ENCODE measurements at regions of chr6 and their contacts with region 1.

Region 1: GRCh38 chr6:53794720-53795253 is at the start of gene LRRC1:
- DNase-seq: peak; percentile 90
- H3K4me3 Mint-ChIP-seq: peak within 1 kb of the TSS; percentile 97
- H3K27ac Mint-ChIP-seq: peak within 1 kb of the TSS; percentile 76
- H3K4me1 Mint-ChIP-seq: peaks cover 24% of the 10 kb centered on the region
- H3K27me3 Mint-ChIP-seq: peaks cover 9% of the 10 kb centered on the region
- total RNA-seq, gene LRRC1: 3.2 TPM

Region 2: GRCh38 chr6:53651764-53652401 is 142.9 kb before region 1 on chr6:
- CTCF ChIA-PET with region 1: interaction called, 3 read pairs
- POLR2A ChIA-PET with region 1: no interaction called
- intact Hi-C with region 1: loop called (anchors 5 kb)
- DNase-seq: peak; percentile 86
- H3K4me3 Mint-ChIP-seq: peak overlapping the region; percentile 85
- H3K27ac Mint-ChIP-seq: peak overlapping the region; percentile 80
- H3K4me1 Mint-ChIP-seq: peaks cover 31% of the 10 kb centered on the region
- H3K27me3 Mint-ChIP-seq: no peaks in the 10 kb centered on the region

Region 3: DNA sequence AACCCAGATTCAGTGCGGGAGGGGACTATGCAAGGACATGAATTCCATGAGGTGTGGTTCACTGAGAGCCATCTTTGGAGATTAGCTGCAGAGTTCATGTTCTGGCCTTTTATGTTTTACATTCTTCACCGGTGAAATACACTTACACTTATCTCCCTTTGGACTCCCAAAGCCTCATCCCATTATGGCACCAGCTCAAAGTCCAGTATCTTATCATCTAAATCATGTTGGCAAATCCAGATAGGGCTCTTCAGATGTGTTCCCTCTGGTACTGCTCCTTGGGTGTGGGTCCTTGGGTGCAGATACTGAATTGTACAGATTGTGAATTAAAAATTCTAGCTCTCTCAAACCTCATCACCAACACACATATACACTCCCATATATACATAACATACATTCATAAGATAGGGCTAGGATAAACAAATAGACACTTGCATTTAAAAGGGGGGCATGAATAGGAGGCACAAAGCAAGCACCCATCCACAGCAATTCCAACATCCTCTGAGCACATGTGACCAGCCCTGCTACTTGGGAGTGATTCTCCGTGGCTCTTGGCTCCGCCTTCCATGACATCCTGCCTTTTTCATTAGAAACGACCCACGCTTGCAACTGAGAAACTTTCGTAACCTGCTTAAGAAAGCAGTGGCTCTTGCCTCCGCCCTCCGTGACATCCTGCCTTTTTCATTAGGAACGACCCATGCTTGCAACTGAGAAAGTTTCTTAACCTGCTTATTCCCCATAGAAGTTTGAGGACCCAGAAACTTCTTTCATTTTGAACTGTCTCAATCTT is 53.6 kb before region 1 on chr6:
- CTCF ChIA-PET with region 1: no interaction called
- POLR2A ChIA-PET with region 1: no interaction called
- intact Hi-C with region 1: loop called (anchors 1 kb)
- DNase-seq: peak; percentile 67
- H3K4me3 Mint-ChIP-seq: peak overlapping the region; percentile 20
- H3K27ac Mint-ChIP-seq: no peak overlapping the region
- H3K4me1 Mint-ChIP-seq: peaks cover 13% of the 10 kb centered on the region
- H3K27me3 Mint-ChIP-seq: peaks cover 3% of the 10 kb centered on the region

Region 4: GRCh38 chr6:53805725-53806124 is 10.9 kb after region 1 on chr6:
- CTCF ChIA-PET with region 1: no interaction called
- POLR2A ChIA-PET with region 1: no interaction called
- intact Hi-C with region 1: loop called (anchors 1 kb)
- DNase-seq: peak; percentile 15
- H3K4me3 Mint-ChIP-seq: no peak overlapping the region
- H3K27ac Mint-ChIP-seq: no peak overlapping the region
- H3K4me1 Mint-ChIP-seq: no peaks in the 10 kb centered on the region
- H3K27me3 Mint-ChIP-seq: no peaks in the 10 kb centered on the region

Region 5: DNA sequence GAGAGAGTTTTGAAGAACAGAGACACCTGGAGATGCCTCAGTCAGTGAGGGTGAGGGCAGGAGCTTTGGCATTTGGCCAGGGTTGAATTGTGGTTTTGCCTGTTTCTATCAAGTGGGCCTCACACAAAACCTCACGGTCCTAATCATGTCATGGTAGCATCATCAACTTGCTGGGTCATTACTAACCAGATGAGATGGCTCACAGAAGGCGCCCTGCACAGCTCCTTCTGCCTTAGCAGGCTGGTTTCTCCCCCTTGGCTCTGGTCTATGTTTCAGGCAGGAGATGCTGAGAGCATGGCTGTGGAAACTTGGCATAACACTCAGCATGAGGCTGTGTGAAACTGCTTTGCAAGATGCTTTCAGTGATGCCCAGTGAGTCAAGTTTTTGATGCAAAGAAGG is 99.3 kb after region 1 on chr6:
- CTCF ChIA-PET with region 1: no interaction called
- POLR2A ChIA-PET with region 1: no interaction called
- intact Hi-C with region 1: loop called (anchors 1 kb)
- DNase-seq: peak; percentile 79
- H3K4me3 Mint-ChIP-seq: no peak overlapping the region
- H3K27ac Mint-ChIP-seq: no peak overlapping the region
- H3K4me1 Mint-ChIP-seq: peaks cover 10% of the 10 kb centered on the region
- H3K27me3 Mint-ChIP-seq: no peaks in the 10 kb centered on the region

Region 6: GRCh38 chr6:53956068-53956711 is 161.4 kb after region 1 on chr6:
- CTCF ChIA-PET with region 1: interaction called, 12 read pairs
- POLR2A ChIA-PET with region 1: no interaction called
- intact Hi-C with region 1: loop called (anchors 1 kb)
- DNase-seq: peak; percentile 46
- H3K4me3 Mint-ChIP-seq: no peak overlapping the region
- H3K27ac Mint-ChIP-seq: no peak overlapping the region
- H3K4me1 Mint-ChIP-seq: no peaks in the 10 kb centered on the region
- H3K27me3 Mint-ChIP-seq: peaks cover 2% of the 10 kb centered on the region

Region 7: GRCh38 chr6:53979468-53980067 is 184.8 kb after region 1 on chr6:
- CTCF ChIA-PET with region 1: no interaction called
- POLR2A ChIA-PET with region 1: no interaction called
- intact Hi-C with region 1: loop called (anchors 5 kb)
- DNase-seq: no peak
- H3K4me3 Mint-ChIP-seq: no peak overlapping the region
- H3K27ac Mint-ChIP-seq: no peak overlapping the region
- H3K4me1 Mint-ChIP-seq: no peaks in the 10 kb centered on the region
- H3K27me3 Mint-ChIP-seq: peaks cover 3% of the 10 kb centered on the region

Measured in activated CD4-positive, alpha-beta memory T cell treated with anti-CD3 and anti-CD28 coated beads for 36 hours (primary cell).